ENCODE measurements at regions of chrX and their contacts with region 1.

Region 1: GRCh38 chrX:48574270-48575266 is at the start of gene RBM3:
- DNase-seq: peak; percentile 74
- ATAC-seq: peak; percentile 94
- H3K4me3 Mint-ChIP-seq: peak within 1 kb of the TSS; percentile 99
- H3K27ac Mint-ChIP-seq: peak within 1 kb of the TSS; percentile 100
- H3K4me1 Mint-ChIP-seq: peaks cover 26% of the 10 kb centered on the region
- H3K27me3 Mint-ChIP-seq: no peaks in the 10 kb centered on the region
- CTCF ChIP-seq: no peak
- total RNA-seq, gene RBM3: 381 and 394 TPM in 2 replicates

Region 2: GRCh38 chrX:47650164-47651042 is 924.2 kb before region 1 on chrX and contains the start of gene ELK1:
- CTCF ChIA-PET with region 1: no interaction called
- POLR2A ChIA-PET with region 1: interaction called, 6 read pairs
- intact Hi-C with region 1: loop called (anchors 1 kb)
- DNase-seq: peak; percentile 76
- ATAC-seq: peak; percentile 92
- H3K4me3 Mint-ChIP-seq: peak within 1 kb of the TSS; percentile 88
- H3K27ac Mint-ChIP-seq: peak within 1 kb of the TSS; percentile 87
- H3K4me1 Mint-ChIP-seq: peaks cover 29% of the 10 kb centered on the region
- H3K27me3 Mint-ChIP-seq: no peaks in the 10 kb centered on the region
- CTCF ChIP-seq: no peak
- total RNA-seq, gene ELK1: 26.5 and 31.8 TPM in 2 replicates

Region 3: DNA sequence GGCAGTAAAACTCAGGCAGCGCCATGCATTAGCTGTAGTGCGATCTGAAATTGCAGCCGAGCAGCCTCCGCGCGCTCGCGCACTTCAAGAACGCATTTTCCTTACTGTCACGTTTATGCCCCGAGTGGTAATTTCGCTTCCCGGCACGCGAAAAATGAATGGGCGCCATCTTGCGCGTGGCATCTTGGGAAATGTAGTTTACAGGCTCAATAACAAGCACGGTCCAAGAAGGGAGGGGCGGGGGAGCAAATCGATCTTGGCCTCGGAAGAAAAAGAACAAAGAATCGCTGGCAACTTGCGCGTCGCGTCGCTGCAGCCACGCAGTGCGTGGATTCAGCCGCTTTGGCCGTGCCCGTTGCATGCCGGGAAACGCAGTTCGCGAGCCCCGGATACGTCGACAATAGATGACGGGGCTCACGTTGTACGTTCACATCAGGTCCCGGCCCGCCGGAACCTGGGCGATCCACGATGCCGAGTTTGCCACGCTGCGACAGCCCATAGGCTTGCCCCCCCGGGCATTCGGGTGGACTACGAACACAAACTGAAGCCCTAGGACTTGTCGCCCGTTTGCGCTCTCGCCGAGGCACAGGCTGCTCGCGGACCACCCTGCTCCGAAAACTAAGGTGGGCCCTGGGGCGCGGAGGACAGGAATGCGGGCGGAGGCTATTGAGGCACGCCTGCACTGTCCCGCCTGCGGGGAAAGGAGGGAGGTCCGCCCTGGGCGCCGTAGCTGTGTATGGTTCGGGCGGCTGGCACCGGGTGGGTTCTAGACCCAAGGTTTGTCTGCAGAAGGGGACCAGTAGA is 98.6 kb before region 1 on chrX and contains the start of gene FTSJ1:
- CTCF ChIA-PET with region 1: no interaction called
- POLR2A ChIA-PET with region 1: interaction called, 3 read pairs
- intact Hi-C with region 1: loop called (anchors 1 kb)
- DNase-seq: peak; percentile 70
- ATAC-seq: peak; percentile 87
- H3K4me3 Mint-ChIP-seq: peak within 1 kb of the TSS; percentile 89
- H3K27ac Mint-ChIP-seq: peak within 1 kb of the TSS; percentile 93
- H3K4me1 Mint-ChIP-seq: peaks cover 23% of the 10 kb centered on the region
- H3K27me3 Mint-ChIP-seq: no peaks in the 10 kb centered on the region
- CTCF ChIP-seq: no peak
- total RNA-seq, gene FTSJ1: 39.9 and 44.5 TPM in 2 replicates

Region 4: DNA sequence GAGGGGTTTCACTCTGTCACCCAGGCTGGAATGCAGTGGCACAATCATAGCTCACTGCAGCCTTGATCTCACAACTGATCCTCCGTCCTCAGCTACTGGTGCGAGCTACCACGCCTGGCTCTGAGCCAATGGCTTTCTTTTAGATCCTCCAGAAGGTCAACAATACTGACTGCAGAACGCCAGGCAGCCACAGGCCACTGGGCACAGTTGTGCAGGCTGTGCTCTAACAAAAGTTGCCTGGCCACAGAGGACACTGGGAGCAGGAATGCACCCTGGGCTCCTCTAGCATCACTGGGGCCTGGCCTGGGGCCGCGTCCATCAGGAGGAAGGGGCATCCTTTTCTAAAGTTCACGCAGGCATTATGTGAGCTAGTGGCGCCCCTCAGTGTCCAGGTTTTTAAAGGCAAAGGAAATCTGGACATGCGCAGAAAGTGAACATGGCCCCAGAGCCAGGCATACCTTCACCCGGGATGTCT is 80.6 kb before region 1 on chrX:
- CTCF ChIA-PET with region 1: no interaction called
- POLR2A ChIA-PET with region 1: no interaction called
- intact Hi-C with region 1: no loop called
- DNase-seq: no peak
- ATAC-seq: peak; percentile 31
- H3K4me3 Mint-ChIP-seq: no peak overlapping the region
- H3K27ac Mint-ChIP-seq: no peak overlapping the region
- H3K4me1 Mint-ChIP-seq: no peaks in the 10 kb centered on the region
- H3K27me3 Mint-ChIP-seq: peaks cover 2% of the 10 kb centered on the region
- CTCF ChIP-seq: no peak

Region 5: DNA sequence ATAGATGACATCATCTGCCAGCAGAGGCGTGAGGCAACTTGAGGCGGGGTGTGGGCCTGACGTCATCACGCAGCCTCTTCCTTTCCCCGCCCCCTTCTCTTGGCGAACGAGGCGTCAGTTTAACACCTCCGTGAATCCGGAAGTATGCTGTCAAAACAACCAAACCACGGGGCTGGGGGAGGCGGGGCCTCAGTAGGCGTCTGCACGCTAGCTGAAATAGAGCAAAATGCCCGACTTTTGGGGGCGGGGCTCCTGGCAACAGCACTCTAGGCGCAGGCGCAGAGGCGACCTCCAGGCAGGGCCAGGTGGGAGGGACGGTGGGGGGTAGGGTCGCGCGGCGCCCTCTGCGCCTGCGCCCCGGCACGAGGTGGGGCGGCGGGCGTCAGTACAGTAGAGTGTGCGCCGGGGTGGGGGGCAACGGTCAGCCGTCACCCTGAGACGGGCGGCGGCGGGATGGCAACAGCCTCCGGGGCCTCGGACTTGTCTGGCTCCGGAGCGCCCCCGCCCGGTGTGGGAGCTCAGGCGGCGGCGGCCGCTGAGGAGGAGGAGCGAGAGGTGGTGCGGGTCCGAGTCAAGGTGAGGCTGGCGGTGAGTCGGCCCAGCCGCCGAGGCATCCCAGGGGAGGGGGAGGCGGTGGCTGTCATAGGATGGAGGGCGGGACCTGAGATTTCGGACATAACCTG is 35.1 kb before region 1 on chrX and contains the start of gene TBC1D25:
- CTCF ChIA-PET with region 1: interaction called, 3 read pairs
- POLR2A ChIA-PET with region 1: interaction called, 45 read pairs
- intact Hi-C with region 1: loop called (anchors 1 kb)
- DNase-seq: peak; percentile 84
- ATAC-seq: peak; percentile 78
- H3K4me3 Mint-ChIP-seq: peak within 1 kb of the TSS; percentile 92
- H3K27ac Mint-ChIP-seq: peak within 1 kb of the TSS; percentile 95
- H3K4me1 Mint-ChIP-seq: peaks cover 20% of the 10 kb centered on the region
- H3K27me3 Mint-ChIP-seq: no peaks in the 10 kb centered on the region
- CTCF ChIP-seq: no peak
- total RNA-seq, gene TBC1D25: 16.4 and 19.4 TPM in 2 replicates

Region 6: GRCh38 chrX:48696301-48697181 is 122.0 kb after region 1 on chrX and contains the start of gene SUV39H1:
- CTCF ChIA-PET with region 1: no interaction called
- POLR2A ChIA-PET with region 1: interaction called, 5 read pairs
- intact Hi-C with region 1: loop called (anchors 2 kb)
- DNase-seq: peak; percentile 70
- ATAC-seq: peak; percentile 96
- H3K4me3 Mint-ChIP-seq: peak within 1 kb of the TSS; percentile 88
- H3K27ac Mint-ChIP-seq: peak within 1 kb of the TSS; percentile 91
- H3K4me1 Mint-ChIP-seq: peaks cover 19% of the 10 kb centered on the region
- H3K27me3 Mint-ChIP-seq: no peaks in the 10 kb centered on the region
- CTCF ChIP-seq: no peak
- total RNA-seq, gene SUV39H1: 9.1 and 10.8 TPM in 2 replicates

Region 7: GRCh38 chrX:48937054-48937907 is 362.7 kb after region 1 on chrX:
- CTCF ChIA-PET with region 1: no interaction called
- POLR2A ChIA-PET with region 1: interaction called, 5 read pairs
- intact Hi-C with region 1: loop called (anchors 10 kb)
- DNase-seq: peak; percentile 68
- ATAC-seq: peak; percentile 54
- H3K4me3 Mint-ChIP-seq: peak overlapping the region; percentile 77
- H3K27ac Mint-ChIP-seq: peak overlapping the region; percentile 98
- H3K4me1 Mint-ChIP-seq: peaks cover 87% of the 10 kb centered on the region
- H3K27me3 Mint-ChIP-seq: no peaks in the 10 kb centered on the region
- CTCF ChIP-seq: no peak